ENCODE measurements at regions of chr9 and their contacts with region 1.

Region 1: GRCh38 chr9:132973713-132974112 is 4.8 kb upstream of the GFI1B start:
- DNase-seq: no peak
- CTCF ChIP-seq: no peak

Region 2: DNA sequence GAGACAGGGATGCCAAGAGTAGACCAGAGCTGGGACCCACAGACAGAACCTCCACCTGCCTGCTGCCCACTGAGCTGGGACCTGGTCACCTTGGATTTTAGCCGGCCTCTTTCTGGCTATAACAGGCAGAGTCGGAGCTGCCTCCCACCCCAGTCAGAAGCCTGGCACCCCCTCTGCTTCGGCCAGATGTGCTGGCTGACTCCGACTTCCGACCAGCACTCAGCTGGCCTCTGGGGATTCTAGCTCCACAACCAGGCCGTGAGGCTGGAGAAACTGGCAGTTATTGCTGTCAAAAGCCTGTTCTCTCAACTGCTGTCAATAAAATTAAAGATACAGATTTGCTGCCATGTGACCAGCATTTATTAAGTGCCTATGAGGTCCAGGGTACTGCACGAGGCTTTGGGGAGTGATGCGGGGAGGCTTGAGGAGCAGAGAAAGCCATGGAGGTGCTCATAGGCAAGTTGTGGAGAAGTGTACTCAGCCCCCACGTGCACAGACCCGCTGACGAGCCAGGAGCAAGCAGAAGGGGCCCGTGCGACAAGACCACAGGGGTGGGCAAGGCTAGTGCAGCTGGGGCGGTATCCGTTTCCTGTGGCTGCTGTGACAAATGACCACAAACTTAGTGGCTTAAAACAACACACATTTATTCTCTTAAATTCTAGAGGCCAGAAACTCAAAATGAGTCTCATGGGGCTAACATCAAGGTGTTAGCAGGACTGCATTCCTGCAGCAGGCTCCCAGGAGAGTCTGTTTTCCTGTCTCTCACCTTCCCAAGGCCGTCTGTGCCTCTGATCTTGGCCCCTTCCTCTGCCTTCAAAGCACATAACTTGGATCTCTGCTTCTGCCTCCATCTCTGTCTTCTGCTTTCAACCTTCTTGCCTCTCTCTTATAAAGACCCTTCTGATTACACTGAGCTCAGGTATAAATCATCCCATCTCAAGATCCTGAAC is 17.9 kb after region 1 on chr9:
- CTCF ChIA-PET with region 1: interaction called, 15 read pairs
- POLR2A ChIA-PET with region 1: no interaction called
- DNase-seq: no peak
- CTCF ChIP-seq: no peak

Region 3: DNA sequence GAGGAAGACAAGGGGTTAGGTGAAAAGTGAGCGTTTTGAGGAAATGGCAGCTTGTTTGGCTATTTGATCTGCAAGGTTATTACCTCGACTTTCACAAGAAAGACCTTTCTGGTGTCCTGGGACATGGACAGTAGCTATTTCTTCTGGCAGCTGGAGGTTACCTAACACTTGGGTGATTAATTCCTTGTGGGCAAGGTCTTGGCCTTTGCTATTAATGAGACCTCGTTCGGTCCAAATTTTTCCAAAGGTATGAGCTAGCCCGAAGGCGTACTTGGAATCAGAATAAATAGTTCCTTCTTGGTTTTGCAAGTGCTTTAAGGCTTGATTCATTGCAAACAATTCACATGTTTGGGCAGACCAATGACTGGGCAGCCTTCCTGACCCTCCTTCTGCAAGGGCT is 62.0 kb after region 1 on chr9:
- CTCF ChIA-PET with region 1: no interaction called
- POLR2A ChIA-PET with region 1: no interaction called
- DNase-seq: no peak
- CTCF ChIP-seq: no peak

Region 4: GRCh38 chr9:133417541-133418461 is 444.1 kb after region 1 on chr9 and contains the start of gene REXO4:
- CTCF ChIA-PET with region 1: no interaction called
- POLR2A ChIA-PET with region 1: no interaction called
- DNase-seq: peak; percentile 84
- CTCF ChIP-seq: no peak